ENCODE measurements at regions of chr1 and their contacts with region 1.

Region 1: DNA sequence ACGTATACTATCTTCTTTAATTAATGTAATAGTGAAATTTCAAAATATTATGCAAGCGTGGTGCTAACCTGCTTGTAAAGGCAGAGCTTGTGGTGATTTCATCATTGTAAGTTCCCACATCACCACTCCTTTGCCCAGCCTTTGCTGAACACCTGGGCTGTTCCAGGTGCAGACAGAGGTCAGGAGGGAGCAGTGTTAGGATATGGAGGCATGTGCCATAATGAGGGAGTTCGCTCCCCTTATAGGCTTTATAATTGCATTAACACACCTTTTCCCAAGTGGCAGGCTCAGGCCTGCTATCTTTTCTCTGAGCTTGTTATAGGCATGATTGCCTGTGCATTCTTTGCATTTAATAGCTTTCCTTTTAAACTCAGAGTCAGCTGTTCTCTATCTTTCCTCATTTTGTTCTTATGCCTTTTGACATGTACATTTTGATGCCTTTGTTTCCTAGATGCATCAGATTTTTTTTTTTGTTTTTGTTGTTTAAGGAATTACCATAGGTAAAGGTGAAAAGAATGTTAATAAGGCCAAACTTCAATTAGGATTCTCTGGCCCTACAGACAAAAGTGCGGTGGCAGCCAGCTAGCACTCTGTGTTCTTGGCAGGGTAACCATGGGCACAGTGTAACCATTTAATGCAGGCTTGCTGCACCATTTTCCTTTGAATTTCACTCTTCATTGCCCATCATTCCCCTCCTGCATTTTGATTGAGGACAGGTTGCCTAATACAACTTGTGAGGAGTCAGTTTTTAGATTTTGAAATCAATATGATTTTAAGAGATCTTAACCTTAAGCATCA is 12.6 kb downstream of the NPL start:
- DNase-seq: no peak
- ATAC-seq: no peak
- H3K4me3 ChIP-seq: no peak overlapping the region
- H3K27ac ChIP-seq: no peak overlapping the region
- H3K4me1 ChIP-seq: no peaks in the 10 kb centered on the region
- H3K27me3 ChIP-seq: no peaks in the 10 kb centered on the region

Region 2: GRCh38 chr1:182839209-182840065 is 37.2 kb after region 1 on chr1 and contains the start of gene DHX9:
- intact Hi-C with region 1: loop called in 1 of 2 experiments (anchors 5 kb)
- DNase-seq: peak; percentile 95 to 99
- ATAC-seq: peak; percentile 98
- H3K4me3 ChIP-seq: peak within 1 kb of the TSS; percentile 48 to 78
- H3K27ac ChIP-seq: peak within 1 kb of the TSS in 1 of 2 donors; percentile 75
- H3K4me1 ChIP-seq: no peaks in the 10 kb centered on the region
- H3K27me3 ChIP-seq: no peaks in the 10 kb centered on the region
- total RNA-seq, gene DHX9: 91.5 to 95.9 TPM

Measured in aorta (tissue), 5 donors.